Activated CD4-positive, alpha-beta T cell treated with anti-CD3 and anti-CD28 coated beads for 36 hours (primary cell): ENCODE measurements at regions of chr15 and their contacts with region 1.

Region 1: GRCh38 chr15:64355944-64356709 is at the start of gene CSNK1G1:
- DNase-seq: peak; percentile 94
- ATAC-seq: peak; percentile 99
- H3K4me3 Mint-ChIP-seq: peak within 1 kb of the TSS; percentile 89
- H3K27ac Mint-ChIP-seq: peak within 1 kb of the TSS; percentile 84
- H3K4me1 Mint-ChIP-seq: peaks cover 17% of the 10 kb centered on the region
- H3K27me3 Mint-ChIP-seq: no peaks in the 10 kb centered on the region
- total RNA-seq, gene CSNK1G1: 20.3 to 22.5 TPM

Region 2: GRCh38 chr15:63945007-63945788 is 410.9 kb before region 1 on chr15:
- CTCF ChIA-PET with region 1: no interaction called
- POLR2A ChIA-PET with region 1: no interaction called
- intact Hi-C with region 1: no loop called
- DNase-seq: peak; percentile 85
- ATAC-seq: peak; percentile 97
- H3K4me3 Mint-ChIP-seq: no peak overlapping the region
- H3K27ac Mint-ChIP-seq: peak overlapping the region; percentile 51
- H3K4me1 Mint-ChIP-seq: peaks cover 4% of the 10 kb centered on the region
- H3K27me3 Mint-ChIP-seq: no peaks in the 10 kb centered on the region

Region 3: GRCh38 chr15:64112904-64113303 is 243.2 kb before region 1 on chr15:
- CTCF ChIA-PET with region 1: no interaction called
- POLR2A ChIA-PET with region 1: no interaction called
- intact Hi-C with region 1: no loop called
- DNase-seq: no peak
- ATAC-seq: peak; percentile 90
- H3K4me3 Mint-ChIP-seq: no peak overlapping the region
- H3K27ac Mint-ChIP-seq: peak overlapping the region; percentile 73
- H3K4me1 Mint-ChIP-seq: peaks cover 30% of the 10 kb centered on the region
- H3K27me3 Mint-ChIP-seq: no peaks in the 10 kb centered on the region

Region 4: DNA sequence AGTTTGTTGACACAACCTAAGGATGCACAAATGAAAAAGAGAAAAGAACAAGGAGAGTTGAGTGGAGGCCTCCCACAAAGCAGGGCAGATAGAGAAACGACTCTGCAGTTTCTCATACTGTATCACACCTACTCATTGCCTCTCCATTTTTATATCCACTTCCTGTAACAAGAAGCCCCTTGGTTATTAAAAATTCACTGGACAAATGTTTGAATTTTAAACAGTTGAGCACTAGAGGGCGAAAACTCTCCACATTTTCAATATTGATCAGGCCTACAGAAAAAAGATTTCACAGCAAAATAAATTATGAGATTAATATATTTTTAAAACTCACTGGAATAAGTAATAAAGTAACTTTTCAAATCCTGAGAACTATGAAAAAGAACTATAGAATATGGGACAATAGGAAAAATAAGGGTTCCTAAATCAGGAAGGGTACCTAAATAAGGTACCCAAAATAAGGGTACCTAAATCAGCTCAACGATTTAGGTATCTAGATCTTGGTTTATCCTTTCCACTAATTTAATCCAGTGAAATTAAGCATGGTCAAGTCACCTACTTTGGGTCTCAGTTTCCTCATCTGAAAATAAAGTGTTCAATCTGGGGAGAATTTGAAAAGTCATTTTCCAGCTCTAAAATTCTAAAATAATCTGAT is 146.3 kb before region 1 on chr15:
- CTCF ChIA-PET with region 1: interaction called, 4 read pairs
- POLR2A ChIA-PET with region 1: no interaction called
- intact Hi-C with region 1: loop called (anchors 1 kb)
- DNase-seq: no peak
- ATAC-seq: peak; percentile 60
- H3K4me3 Mint-ChIP-seq: no peak overlapping the region
- H3K27ac Mint-ChIP-seq: no peak overlapping the region
- H3K4me1 Mint-ChIP-seq: peaks cover 7% of the 10 kb centered on the region
- H3K27me3 Mint-ChIP-seq: no peaks in the 10 kb centered on the region

Region 5: GRCh38 chr15:64381000-64381752 is 25.0 kb after region 1 on chr15 and contains the start of gene PCLAF:
- CTCF ChIA-PET with region 1: no interaction called
- POLR2A ChIA-PET with region 1: no interaction called
- intact Hi-C with region 1: loop called (anchors 1 kb)
- DNase-seq: peak; percentile 97
- ATAC-seq: peak; percentile 99
- H3K4me3 Mint-ChIP-seq: peak within 1 kb of the TSS; percentile 97
- H3K27ac Mint-ChIP-seq: peak within 1 kb of the TSS; percentile 84
- H3K4me1 Mint-ChIP-seq: peaks cover 18% of the 10 kb centered on the region
- H3K27me3 Mint-ChIP-seq: no peaks in the 10 kb centered on the region
- total RNA-seq, gene PCLAF: 41.4 to 97.6 TPM

Region 6: GRCh38 chr15:64412216-64412615 is 56.1 kb after region 1 on chr15:
- CTCF ChIA-PET with region 1: no interaction called
- POLR2A ChIA-PET with region 1: no interaction called
- intact Hi-C with region 1: no loop called
- DNase-seq: no peak
- ATAC-seq: no peak
- H3K4me3 Mint-ChIP-seq: no peak overlapping the region
- H3K27ac Mint-ChIP-seq: no peak overlapping the region
- H3K4me1 Mint-ChIP-seq: no peaks in the 10 kb centered on the region
- H3K27me3 Mint-ChIP-seq: no peaks in the 10 kb centered on the region

Region 7: GRCh38 chr15:64841258-64842095 is 485.4 kb after region 1 on chr15 and contains the start of gene PLEKHO2:
- CTCF ChIA-PET with region 1: no interaction called
- POLR2A ChIA-PET with region 1: no interaction called
- intact Hi-C with region 1: loop called in 1 of 2 experiments (anchors 1 kb)
- DNase-seq: peak; percentile 94
- ATAC-seq: peak; percentile 73
- H3K4me3 Mint-ChIP-seq: peak within 1 kb of the TSS; percentile 88
- H3K27ac Mint-ChIP-seq: peak within 1 kb of the TSS; percentile 84
- H3K4me1 Mint-ChIP-seq: peaks cover 66% of the 10 kb centered on the region
- H3K27me3 Mint-ChIP-seq: no peaks in the 10 kb centered on the region
- total RNA-seq, gene PLEKHO2: 11.4 to 13.3 TPM